Calu3 (cell line): ENCODE measurements at regions of chr5 and their contacts with region 1.

Region 1: DNA sequence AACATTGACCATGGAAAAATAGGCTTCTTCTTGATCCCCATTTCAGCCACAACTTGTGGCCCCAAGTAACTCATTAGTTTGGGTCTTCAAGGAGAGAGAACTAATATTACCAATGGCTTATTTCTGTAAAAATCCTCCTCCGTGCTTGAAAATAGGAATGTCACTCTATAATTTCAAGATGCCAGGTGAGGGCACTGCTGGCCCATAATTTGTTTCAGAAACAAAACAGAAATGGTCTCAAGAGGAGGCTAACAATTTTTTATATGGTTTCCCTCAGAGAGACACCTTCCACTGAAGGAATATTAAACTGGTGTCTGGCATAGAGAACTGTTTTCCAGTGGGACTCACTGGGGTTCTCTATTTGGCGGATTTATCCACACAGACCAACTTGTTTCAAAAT is 437.0 kb upstream of the TRPC7 start:
- DNase-seq: peak; percentile 44
- H3K4me3 Mint-ChIP-seq: no peak overlapping the region
- H3K27ac Mint-ChIP-seq: no peak overlapping the region
- H3K4me1 Mint-ChIP-seq: no peaks in the 10 kb centered on the region
- H3K27me3 Mint-ChIP-seq: peaks cover 34% of the 10 kb centered on the region
- CTCF ChIP-seq: no peak

Region 2: DNA sequence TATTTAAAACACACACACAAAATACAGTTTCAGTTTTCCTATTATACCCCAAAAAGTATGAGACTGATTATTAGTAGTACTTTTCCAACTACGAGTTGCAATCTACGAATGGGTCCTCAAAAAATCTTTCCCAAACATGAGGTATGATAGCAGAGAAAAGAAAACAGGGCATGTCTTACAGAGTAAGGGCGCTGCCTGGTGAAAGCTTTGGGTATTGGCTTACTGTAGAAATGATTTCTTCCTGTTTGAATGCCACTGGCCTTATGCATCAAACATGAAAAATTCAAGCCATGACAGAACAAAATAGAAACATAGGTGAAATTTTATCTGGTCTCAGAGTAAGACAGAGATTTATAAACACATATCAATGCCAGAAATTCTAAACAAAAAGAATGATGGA is 248.8 kb after region 1 on chr5:
- CTCF ChIA-PET with region 1: no interaction called
- intact Hi-C with region 1: loop called (anchors 2 kb)
- DNase-seq: peak; percentile 36
- H3K4me3 Mint-ChIP-seq: no peak overlapping the region
- H3K27ac Mint-ChIP-seq: no peak overlapping the region
- H3K4me1 Mint-ChIP-seq: no peaks in the 10 kb centered on the region
- H3K27me3 Mint-ChIP-seq: no peaks in the 10 kb centered on the region
- CTCF ChIP-seq: peak; percentile 44

Region 3: GRCh38 chr5:137220523-137220927 is 418.1 kb after region 1 on chr5:
- CTCF ChIA-PET with region 1: interaction called, 3 read pairs
- intact Hi-C with region 1: loop called (anchors 1 kb)
- DNase-seq: peak; percentile 71
- H3K4me3 Mint-ChIP-seq: no peak overlapping the region
- H3K27ac Mint-ChIP-seq: no peak overlapping the region
- H3K4me1 Mint-ChIP-seq: peaks cover 51% of the 10 kb centered on the region
- H3K27me3 Mint-ChIP-seq: no peaks in the 10 kb centered on the region
- CTCF ChIP-seq: peak; percentile 56

Region 4: GRCh38 chr5:137498736-137499505 is 696.5 kb after region 1 on chr5 and contains the start of gene SPOCK1:
- CTCF ChIA-PET with region 1: no interaction called
- intact Hi-C with region 1: loop called (anchors 2 kb)
- DNase-seq: peak; percentile 90
- H3K4me3 Mint-ChIP-seq: no peak within 1 kb of the TSS
- H3K27ac Mint-ChIP-seq: no peak within 1 kb of the TSS
- H3K4me1 Mint-ChIP-seq: no peaks in the 10 kb centered on the region
- H3K27me3 Mint-ChIP-seq: peaks cover 48% of the 10 kb centered on the region
- CTCF ChIP-seq: peak; percentile 92
- total RNA-seq, gene SPOCK1: 3.2 and 3.3 TPM in 2 replicates